Activated B cell treated with CpG ODN at 0.5 μM for 24 hours (primary cell): ENCODE measurements at regions of chr21 and their contacts with region 1.

Region 1: DNA sequence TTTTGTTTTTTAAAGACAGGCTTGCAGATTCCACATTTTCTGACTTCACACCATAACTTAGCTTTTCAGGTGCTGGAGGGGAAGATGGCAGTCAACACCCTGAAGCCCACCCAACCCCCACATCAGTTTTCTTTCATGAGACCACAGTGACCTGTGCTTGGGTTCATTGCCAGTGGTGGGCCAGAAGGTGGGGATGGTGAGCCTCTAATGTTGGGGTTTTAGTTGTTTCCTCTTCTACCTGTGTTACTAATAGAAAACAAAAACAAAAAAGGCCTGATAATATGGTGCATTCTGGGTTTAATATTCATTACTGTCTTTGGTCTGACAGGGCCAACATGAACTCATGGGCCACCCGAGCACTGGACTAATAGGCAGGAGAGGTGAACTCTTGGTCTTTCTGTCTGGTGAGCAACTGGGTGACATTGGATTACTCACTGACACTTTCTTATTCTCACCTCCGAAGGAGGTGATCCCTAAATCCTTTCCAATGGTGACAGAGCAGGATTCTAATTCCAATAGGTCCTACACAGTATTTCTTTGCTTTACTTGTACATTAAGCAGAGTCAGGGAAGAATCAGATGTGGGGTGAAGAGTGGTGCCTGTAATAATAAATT is 132.8 kb downstream of the CLIC6 start:
- DNase-seq: no peak
- ATAC-seq: peak; percentile 83
- H3K4me3 Mint-ChIP-seq: no peak overlapping the region
- H3K27ac Mint-ChIP-seq: no peak overlapping the region
- H3K4me1 Mint-ChIP-seq: peaks cover 25% of the 10 kb centered on the region
- H3K27me3 Mint-ChIP-seq: no peaks in the 10 kb centered on the region
- CTCF ChIP-seq: no peak

Region 2: GRCh38 chr21:34737107-34737506 is 64.5 kb before region 1 on chr21:
- CTCF ChIA-PET with region 1: no interaction called
- POLR2A ChIA-PET with region 1: no interaction called
- intact Hi-C with region 1: no loop called
- DNase-seq: no peak
- ATAC-seq: no peak
- H3K4me3 Mint-ChIP-seq: no peak overlapping the region
- H3K27ac Mint-ChIP-seq: no peak overlapping the region
- H3K4me1 Mint-ChIP-seq: no peaks in the 10 kb centered on the region
- H3K27me3 Mint-ChIP-seq: peaks cover 19% of the 10 kb centered on the region
- CTCF ChIP-seq: no peak

Region 3: DNA sequence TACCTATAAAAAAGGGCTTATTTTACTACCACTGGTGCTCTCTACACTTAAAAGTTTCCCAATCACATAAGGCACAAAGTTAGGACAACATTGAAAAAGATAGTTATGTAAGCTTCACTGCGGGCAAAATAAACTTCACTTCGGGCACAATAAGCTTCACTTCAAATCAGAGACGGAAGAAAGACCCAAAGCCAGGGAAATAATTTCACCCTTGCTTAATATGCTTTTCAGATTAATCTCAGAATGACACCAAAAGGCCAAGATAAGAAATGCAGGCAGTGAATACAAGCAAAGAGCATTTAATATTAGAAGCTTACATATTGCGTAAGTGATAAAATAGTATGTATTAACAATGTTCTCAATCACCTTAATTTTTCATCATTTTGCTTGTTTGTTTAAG is 814.5 kb after region 1 on chr21:
- CTCF ChIA-PET with region 1: no interaction called
- POLR2A ChIA-PET with region 1: no interaction called
- intact Hi-C with region 1: loop called (anchors 2 kb)
- DNase-seq: no peak
- ATAC-seq: no peak
- H3K4me3 Mint-ChIP-seq: no peak overlapping the region
- H3K27ac Mint-ChIP-seq: no peak overlapping the region
- H3K4me1 Mint-ChIP-seq: peaks cover 3% of the 10 kb centered on the region
- H3K27me3 Mint-ChIP-seq: no peaks in the 10 kb centered on the region
- CTCF ChIP-seq: no peak

Region 4: GRCh38 chr21:35940074-35940927 is 1138.7 kb after region 1 on chr21:
- CTCF ChIA-PET with region 1: no interaction called
- POLR2A ChIA-PET with region 1: no interaction called
- intact Hi-C with region 1: loop called (anchors 1 kb)
- DNase-seq: no peak
- ATAC-seq: peak; percentile 71
- H3K4me3 Mint-ChIP-seq: no peak overlapping the region
- H3K27ac Mint-ChIP-seq: no peak overlapping the region
- H3K4me1 Mint-ChIP-seq: peaks cover 2% of the 10 kb centered on the region
- H3K27me3 Mint-ChIP-seq: peaks cover 3% of the 10 kb centered on the region
- CTCF ChIP-seq: no peak